CD8-positive, alpha-beta T cell (primary cell): ENCODE measurements at regions of chr7 and their contacts with region 1.

Region 1: DNA sequence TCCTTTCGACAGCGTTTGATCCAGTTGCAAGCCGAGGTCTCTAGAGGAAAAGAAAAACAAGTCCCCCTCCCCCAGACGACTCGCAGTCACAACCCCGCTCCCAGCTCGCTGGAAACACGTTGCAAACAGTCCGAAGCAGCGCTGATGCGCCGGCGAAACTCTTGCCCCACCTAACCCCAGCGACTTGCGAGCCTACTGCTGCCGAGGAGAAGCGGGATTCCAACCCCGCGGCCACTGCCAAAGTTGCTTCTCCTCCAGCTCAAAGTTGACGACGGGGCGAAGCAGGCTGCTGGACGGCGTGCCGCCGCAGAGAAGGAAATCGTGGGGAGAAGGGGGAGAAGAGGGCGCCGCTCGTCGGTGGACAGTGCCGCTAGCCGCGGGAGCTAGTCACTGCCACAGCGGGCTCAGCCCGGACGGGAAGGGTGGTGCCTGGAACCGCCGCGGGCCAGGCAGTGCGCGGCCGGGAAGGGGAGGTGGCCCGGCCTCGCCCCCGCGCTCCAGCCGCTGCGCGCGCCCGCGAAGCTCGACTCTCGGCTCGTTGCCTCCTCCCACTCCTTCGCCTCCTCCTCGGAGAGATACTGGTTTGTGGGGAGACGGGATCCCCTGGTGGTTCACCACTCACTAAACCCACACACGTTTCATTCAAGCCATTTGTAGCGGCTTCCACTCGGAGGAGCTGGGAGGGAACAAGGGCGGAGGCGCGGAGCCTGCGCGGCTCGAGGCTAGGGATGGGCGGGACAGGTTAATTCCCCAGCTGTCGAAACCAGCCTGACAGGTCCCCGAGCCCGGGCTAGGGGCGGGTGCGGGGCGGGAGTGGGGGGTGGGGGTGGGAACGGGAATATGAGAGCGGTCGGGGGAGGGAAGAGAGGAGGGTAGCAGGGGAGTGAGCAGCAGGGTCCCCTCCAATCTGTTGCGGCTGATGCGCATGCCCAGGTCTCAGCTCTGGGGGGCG is at the start of gene GPR37:
- DNase-seq: peak in 2 of 9 experiments; percentile 6
- ATAC-seq: no peak
- H3K4me3 ChIP-seq: peak within 1 kb of the TSS; percentile 36 to 59
- H3K4me3 Mint-ChIP-seq: peak within 1 kb of the TSS; percentile 79
- H3K27ac ChIP-seq: no peak within 1 kb of the TSS
- H3K27ac Mint-ChIP-seq: no peak within 1 kb of the TSS
- H3K4me1 ChIP-seq: peaks cover 5% of the 10 kb centered on the region
- H3K4me1 Mint-ChIP-seq: peaks cover 11% of the 10 kb centered on the region
- H3K27me3 ChIP-seq: peaks cover 17 to 27% of the 10 kb centered on the region in 2 experiments
- H3K27me3 Mint-ChIP-seq: peaks cover 51% of the 10 kb centered on the region
- CTCF ChIP-seq: no peak
- total RNA-seq, gene GPR37: not detected

Region 2: DNA sequence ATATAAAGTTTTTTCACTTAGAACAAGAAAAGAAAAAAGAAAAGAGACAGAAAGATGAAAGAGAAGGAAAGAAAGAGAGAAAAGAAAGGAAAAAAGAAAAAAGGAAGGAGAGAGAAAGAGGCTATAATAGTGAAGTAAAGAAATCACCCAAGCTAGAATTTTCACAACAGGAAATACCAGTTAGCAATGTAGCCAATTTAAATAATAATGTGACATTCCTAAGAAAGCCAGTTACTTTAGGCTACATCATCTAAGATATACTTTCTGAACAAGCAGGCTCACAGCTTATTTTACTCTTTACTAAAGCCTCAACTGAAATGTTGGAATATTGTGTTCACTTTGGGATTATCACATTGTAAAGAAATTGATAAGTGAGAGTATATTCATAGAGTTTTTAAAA is 53.7 kb before region 1 on chr7:
- CTCF ChIA-PET with region 1: no interaction called
- POLR2A ChIA-PET with region 1: no interaction called
- intact Hi-C with region 1: loop called in 1 of 2 experiments (anchors 5 kb)
- DNase-seq: no peak
- ATAC-seq: no peak
- H3K4me3 ChIP-seq: no peak overlapping the region
- H3K4me3 Mint-ChIP-seq: no peak overlapping the region
- H3K27ac ChIP-seq: no peak overlapping the region
- H3K27ac Mint-ChIP-seq: no peak overlapping the region
- H3K4me1 ChIP-seq: no peaks in the 10 kb centered on the region
- H3K4me1 Mint-ChIP-seq: no peaks in the 10 kb centered on the region
- H3K27me3 ChIP-seq: no peaks in the 10 kb centered on the region
- H3K27me3 Mint-ChIP-seq: peaks cover 6% of the 10 kb centered on the region
- CTCF ChIP-seq: no peak

Region 3: GRCh38 chr7:124728610-124729009 is 37.1 kb before region 1 on chr7:
- CTCF ChIA-PET with region 1: no interaction called
- POLR2A ChIA-PET with region 1: no interaction called
- intact Hi-C with region 1: no loop called
- DNase-seq: no peak
- ATAC-seq: no peak
- H3K4me3 ChIP-seq: no peak overlapping the region
- H3K4me3 Mint-ChIP-seq: no peak overlapping the region
- H3K27ac ChIP-seq: no peak overlapping the region
- H3K27ac Mint-ChIP-seq: no peak overlapping the region
- H3K4me1 ChIP-seq: no peaks in the 10 kb centered on the region
- H3K4me1 Mint-ChIP-seq: no peaks in the 10 kb centered on the region
- H3K27me3 ChIP-seq: no peaks in the 10 kb centered on the region
- H3K27me3 Mint-ChIP-seq: peaks cover 8% of the 10 kb centered on the region
- CTCF ChIP-seq: no peak

Region 4: GRCh38 chr7:124752310-124752709 is 13.4 kb before region 1 on chr7:
- CTCF ChIA-PET with region 1: no interaction called
- POLR2A ChIA-PET with region 1: no interaction called
- intact Hi-C with region 1: no loop called
- DNase-seq: no peak
- ATAC-seq: no peak
- H3K4me3 ChIP-seq: no peak overlapping the region
- H3K4me3 Mint-ChIP-seq: no peak overlapping the region
- H3K27ac ChIP-seq: no peak overlapping the region
- H3K27ac Mint-ChIP-seq: no peak overlapping the region
- H3K4me1 ChIP-seq: no peaks in the 10 kb centered on the region
- H3K4me1 Mint-ChIP-seq: no peaks in the 10 kb centered on the region
- H3K27me3 ChIP-seq: no peaks in the 10 kb centered on the region
- H3K27me3 Mint-ChIP-seq: peaks cover 6% of the 10 kb centered on the region
- CTCF ChIP-seq: no peak

Region 5: DNA sequence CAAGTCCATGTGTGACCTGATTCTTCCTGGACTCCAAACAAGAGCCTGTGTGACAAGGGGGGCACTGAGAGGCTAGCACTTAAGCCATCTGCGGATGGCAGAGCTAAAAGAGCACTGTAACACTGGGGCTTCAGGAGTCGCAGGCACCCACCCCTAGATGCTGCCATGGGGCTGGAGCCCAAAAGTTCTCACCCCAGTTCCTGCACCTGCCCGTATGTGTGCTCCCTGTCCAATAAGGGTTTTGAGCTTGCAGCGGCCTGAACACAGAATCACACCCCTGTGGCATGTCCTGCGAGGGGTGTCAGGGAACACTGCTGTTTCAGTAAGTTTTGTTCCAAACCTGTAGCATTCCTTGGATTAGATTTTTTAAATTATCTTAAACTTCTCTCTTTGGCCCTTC is 53.1 kb after region 1 on chr7:
- CTCF ChIA-PET with region 1: no interaction called
- POLR2A ChIA-PET with region 1: no interaction called
- intact Hi-C with region 1: loop called in 1 of 2 experiments (anchors 10 kb)
- DNase-seq: no peak
- ATAC-seq: no peak
- H3K4me3 ChIP-seq: no peak overlapping the region
- H3K4me3 Mint-ChIP-seq: no peak overlapping the region
- H3K27ac ChIP-seq: no peak overlapping the region
- H3K27ac Mint-ChIP-seq: no peak overlapping the region
- H3K4me1 ChIP-seq: no peaks in the 10 kb centered on the region
- H3K4me1 Mint-ChIP-seq: no peaks in the 10 kb centered on the region
- H3K27me3 ChIP-seq: no peaks in the 10 kb centered on the region
- H3K27me3 Mint-ChIP-seq: no peaks in the 10 kb centered on the region
- CTCF ChIP-seq: no peak